AG04450 (cell line): ENCODE measurements at regions of chr2 and their contacts with region 1.

Region 1: DNA sequence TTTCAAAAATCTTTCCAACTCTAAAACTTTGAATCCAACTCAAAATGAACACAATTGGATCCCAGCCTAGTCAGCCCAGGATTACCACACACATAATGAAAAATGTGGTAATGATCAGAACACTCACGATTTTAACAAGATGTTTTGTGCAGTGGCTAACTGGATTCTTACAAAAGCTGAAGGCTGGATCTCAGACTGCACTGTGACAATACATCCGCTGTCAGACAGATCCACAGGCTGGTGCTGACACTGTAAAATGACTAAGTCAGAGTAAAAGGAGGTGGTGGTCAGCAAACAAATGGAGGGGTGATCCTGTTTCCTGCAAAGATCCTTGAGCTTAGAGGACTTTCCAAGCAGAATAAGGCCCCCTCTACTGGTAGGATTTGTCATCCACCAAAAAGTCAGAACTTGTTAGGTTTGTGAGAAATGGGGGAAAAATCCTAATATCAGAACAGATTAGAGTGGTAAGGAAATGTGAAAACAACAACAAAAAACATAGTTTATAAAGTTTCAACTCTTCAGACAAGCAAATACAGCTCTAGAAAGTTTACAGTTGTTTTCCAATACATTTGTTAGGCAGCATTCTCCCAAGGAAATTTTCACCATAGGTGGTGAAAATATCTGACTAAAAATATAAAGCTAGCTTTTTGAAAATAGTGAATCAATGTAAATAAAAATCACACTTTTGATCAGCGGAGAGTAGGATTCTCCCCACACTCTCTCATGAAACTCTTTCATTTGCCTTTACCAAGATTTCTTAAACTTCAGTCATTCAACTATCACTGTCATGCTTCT is 211.9 kb downstream of the AGPS start:
- DNase-seq: peak; percentile 23
- H3K4me3 ChIP-seq: peak overlapping the region; percentile 8; the same call in 1 of the 2 replicates
- H3K27ac ChIP-seq: no peak overlapping the region
- H3K27me3 ChIP-seq: no peaks in the 10 kb centered on the region
- CTCF ChIP-seq: peak; percentile 85

Region 2: DNA sequence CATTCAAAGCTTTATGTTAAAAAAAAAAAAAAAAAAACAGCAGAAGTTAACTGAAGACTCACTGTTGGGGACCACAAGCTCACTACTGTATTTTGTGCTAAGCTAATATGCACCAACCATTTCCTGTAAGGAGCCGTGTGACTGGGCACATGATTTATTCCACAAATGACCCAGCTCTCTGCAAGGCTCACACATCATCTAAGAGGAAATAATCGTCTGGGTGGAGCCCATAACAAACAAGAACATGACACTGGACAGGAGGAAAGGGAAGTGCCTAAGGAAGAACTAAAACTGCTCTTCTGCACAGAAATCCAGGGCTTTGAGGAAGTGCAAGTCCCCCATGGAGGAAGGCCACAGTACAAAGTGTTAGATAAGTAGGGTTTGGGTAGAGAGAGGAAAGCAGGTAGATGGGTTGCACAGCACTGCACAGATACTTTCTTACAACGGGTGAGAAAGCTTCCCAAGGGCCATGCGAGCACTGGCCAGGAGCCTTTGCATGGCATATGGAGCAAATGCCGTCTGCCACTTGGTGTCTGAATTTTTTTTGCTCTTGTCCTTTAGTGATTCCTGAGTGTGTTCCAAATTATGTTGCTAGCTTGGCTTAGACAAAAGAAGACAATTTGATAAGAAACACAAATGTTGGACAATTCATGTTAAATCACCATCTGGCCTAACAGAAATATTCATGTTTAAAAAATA is 364.4 kb before region 1 on chr2:
- CTCF ChIA-PET with region 1: no interaction called
- POLR2A ChIA-PET with region 1: no interaction called
- DNase-seq: no peak
- H3K4me3 ChIP-seq: no peak overlapping the region
- H3K27ac ChIP-seq: no peak overlapping the region
- H3K27me3 ChIP-seq: no peaks in the 10 kb centered on the region
- CTCF ChIP-seq: no peak

Region 3: GRCh38 chr2:177525351-177525924 is 79.0 kb before region 1 on chr2:
- CTCF ChIA-PET with region 1: interaction called, 23 read pairs
- POLR2A ChIA-PET with region 1: no interaction called
- DNase-seq: no peak
- H3K4me3 ChIP-seq: no peak overlapping the region
- H3K27ac ChIP-seq: no peak overlapping the region
- H3K27me3 ChIP-seq: no peaks in the 10 kb centered on the region
- CTCF ChIP-seq: no peak

Region 4: DNA sequence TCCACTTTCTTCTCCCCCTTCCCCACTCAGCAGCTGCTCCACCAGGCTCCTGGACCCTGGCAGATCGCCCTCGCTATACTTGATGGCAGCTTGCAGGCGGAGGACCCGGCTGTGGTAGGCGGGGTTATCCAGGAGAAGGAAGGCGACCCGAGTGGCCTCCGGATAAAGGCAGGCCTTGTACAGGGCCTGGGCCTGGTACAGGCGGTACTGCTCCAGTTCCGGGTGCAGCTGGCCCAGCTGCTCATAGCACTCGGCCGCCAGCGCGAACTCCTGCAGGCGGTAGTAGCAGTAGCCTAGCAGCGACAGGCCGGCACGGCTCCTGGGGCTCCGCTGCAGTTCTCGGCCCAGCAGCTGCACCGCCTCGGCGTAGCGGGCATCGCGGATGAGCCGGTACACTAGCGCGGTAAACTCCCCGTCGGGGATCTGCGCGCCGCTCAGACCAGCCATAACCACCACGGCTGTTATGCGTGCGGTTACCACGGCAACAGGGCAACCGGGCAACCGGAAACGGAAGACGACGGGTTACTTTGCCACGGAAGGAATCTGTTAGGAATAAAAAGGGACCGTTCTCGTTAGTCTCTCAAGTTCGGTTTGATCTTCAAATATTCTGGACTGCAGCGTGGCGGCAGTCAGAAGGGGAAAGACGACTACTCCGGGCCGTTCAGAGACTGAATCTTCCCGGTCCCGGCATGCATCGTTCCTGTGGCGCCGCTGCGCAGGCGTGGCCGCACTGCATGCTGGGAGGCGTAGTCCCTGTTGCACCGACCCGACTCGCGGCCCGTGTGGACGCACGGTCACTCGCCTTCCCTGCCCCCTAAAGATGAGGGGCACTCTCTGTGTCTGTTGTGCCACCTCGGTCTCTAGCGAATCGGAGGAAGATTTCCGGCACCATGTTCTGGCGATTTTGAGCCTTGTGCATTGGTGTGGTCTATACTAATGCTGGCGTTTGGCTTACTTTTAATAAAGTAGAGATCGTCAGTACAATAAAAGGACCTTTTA is 14.1 kb after region 1 on chr2:
- CTCF ChIA-PET with region 1: interaction called, 68 read pairs
- POLR2A ChIA-PET with region 1: no interaction called
- DNase-seq: peak; percentile 51
- H3K4me3 ChIP-seq: peak overlapping the region; percentile 88
- H3K27ac ChIP-seq: peak overlapping the region; percentile 92
- H3K27me3 ChIP-seq: no peaks in the 10 kb centered on the region
- CTCF ChIP-seq: no peak

Region 5: GRCh38 chr2:177692828-177693269 is 88.4 kb after region 1 on chr2:
- CTCF ChIA-PET with region 1: no interaction called
- POLR2A ChIA-PET with region 1: no interaction called
- DNase-seq: no peak
- H3K4me3 ChIP-seq: no peak overlapping the region
- H3K27ac ChIP-seq: no peak overlapping the region
- H3K27me3 ChIP-seq: no peaks in the 10 kb centered on the region
- CTCF ChIP-seq: no peak

Region 6: DNA sequence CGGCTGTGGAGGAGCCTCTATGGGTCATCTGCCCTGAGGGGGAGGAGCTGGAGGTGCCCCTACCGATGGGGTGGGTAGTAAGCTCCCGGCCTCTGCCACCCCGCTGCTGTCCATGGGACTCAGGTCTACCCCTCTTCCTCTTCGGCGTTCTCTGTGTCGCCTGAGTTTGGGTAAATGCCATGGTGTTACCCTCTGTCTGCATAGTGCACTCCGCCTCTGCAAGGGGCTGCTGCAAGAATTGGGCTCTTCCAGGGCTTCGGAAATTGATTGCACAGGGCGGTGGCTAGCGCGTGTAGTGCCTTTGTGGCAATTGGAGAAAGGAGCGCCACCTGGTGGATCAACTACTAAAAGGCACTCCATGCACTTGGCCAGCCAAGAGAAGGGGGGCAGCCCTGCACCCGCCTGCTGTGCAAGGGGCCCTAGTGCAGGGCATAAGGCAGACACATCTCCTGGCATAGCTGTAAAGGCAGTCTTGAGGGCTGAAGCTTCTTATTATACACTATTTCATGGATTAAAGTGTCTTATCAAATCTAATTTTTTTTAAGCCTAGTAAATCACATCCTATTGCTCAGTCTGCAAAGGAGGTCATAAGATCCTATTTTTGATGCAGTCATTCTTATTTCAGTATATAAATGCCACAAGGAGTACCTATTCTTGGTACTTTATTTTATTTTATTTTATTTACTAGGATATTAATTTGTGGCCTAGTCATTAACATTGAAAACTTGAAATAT is 159.2 kb after region 1 on chr2:
- CTCF ChIA-PET with region 1: interaction called, 19 read pairs
- POLR2A ChIA-PET with region 1: no interaction called
- DNase-seq: peak; percentile 29
- H3K4me3 ChIP-seq: peak overlapping the region; percentile 21; the same call in 1 of the 2 replicates
- H3K27ac ChIP-seq: no peak overlapping the region
- H3K27me3 ChIP-seq: no peaks in the 10 kb centered on the region
- CTCF ChIP-seq: peak; percentile 80